Esophagus muscularis mucosa (tissue), 4 donors: ENCODE measurements at regions of chr6 and their contacts with region 1.

Region 1: DNA sequence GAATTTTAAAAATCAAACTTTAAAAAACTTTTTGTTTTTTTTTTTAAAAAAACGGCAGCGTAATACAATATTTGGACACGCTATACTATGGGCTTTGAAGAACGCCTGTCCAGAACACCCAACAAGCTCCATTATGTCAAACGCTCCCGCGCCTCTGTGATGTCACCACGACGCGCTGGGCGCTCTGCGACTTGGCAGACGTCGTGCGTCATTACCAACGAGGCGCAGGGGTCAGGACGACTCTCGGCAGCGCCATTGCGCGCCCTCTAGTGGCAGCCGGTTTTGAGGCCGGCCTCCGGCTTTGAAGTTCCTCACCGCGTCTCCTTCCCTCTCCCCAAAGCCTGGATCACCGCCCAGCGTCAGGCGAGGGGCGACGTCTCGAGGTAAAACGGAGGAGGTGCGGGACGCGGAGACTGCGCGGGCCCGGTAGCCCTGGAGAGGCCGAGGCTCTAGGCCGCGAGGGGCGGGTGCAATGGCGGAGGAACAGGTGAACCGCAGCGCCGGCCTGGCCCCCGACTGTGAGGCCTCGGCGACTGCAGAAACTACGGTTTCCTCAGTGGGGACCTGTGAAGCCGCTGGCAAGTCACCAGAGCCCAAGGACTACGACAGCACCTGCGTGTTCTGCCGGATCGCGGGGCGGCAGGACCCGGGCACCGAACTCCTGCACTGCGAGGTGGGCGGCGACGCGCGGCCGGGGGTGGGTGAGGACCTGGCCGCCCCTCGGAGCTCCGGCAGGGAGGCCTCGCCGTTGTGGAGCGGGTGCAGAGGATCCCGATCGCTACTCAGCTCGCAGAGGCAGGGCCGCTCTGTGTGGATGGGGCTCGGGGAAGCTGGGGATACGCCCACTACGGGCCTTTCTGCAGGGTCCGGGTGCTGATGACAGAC is at the start of gene HINT3:
- DNase-seq: peak; percentile 99
- H3K4me3 ChIP-seq: peak within 1 kb of the TSS; percentile 76 to 98 (median 94)
- H3K27ac ChIP-seq: peak within 1 kb of the TSS; percentile 89 to 94 (median 93)
- H3K4me1 ChIP-seq: peaks cover 10 to 33% (median 28%) of the 10 kb centered on the region in 4 donors
- H3K27me3 ChIP-seq: peaks cover 0 to 8% (median 0%) of the 10 kb centered on the region in 4 donors
- CTCF ChIP-seq: peak; percentile 94 to 95 (median 94)
- EP300 ChIP-seq: no peak
- POLR2A ChIP-seq: no peak
- total RNA-seq, gene HINT3: 33.8 to 49.3 (median 35.8) TPM

Region 2: GRCh38 chr6:125301435-125302391 is 655.0 kb before region 1 on chr6 and contains the start of gene HDDC2:
- intact Hi-C with region 1: loop called (anchors 10 kb)
- DNase-seq: peak; percentile 93
- H3K4me3 ChIP-seq: peak within 1 kb of the TSS; percentile 66 to 93 (median 86)
- H3K27ac ChIP-seq: peak within 1 kb of the TSS; percentile 90 to 96 (median 94)
- H3K4me1 ChIP-seq: peaks cover 16 to 26% (median 22%) of the 10 kb centered on the region in 4 donors
- H3K27me3 ChIP-seq: no peaks in the 10 kb centered on the region
- CTCF ChIP-seq: no peak
- EP300 ChIP-seq: no peak
- POLR2A ChIP-seq: no peak
- total RNA-seq, gene HDDC2: 29.6 to 47.7 (median 38.4) TPM

Region 3: GRCh38 chr6:125789576-125790357 is 167.0 kb before region 1 on chr6:
- intact Hi-C with region 1: loop called (anchors 2 kb)
- DNase-seq: no peak
- H3K4me3 ChIP-seq: peak overlapping the region; percentile 87 to 91 (median 90)
- H3K27ac ChIP-seq: peak overlapping the region; percentile 92 to 99 (median 96)
- H3K4me1 ChIP-seq: peaks cover 15 to 39% (median 28%) of the 10 kb centered on the region in 4 donors
- H3K27me3 ChIP-seq: no peaks in the 10 kb centered on the region
- CTCF ChIP-seq: no peak
- EP300 ChIP-seq: no peak
- POLR2A ChIP-seq: no peak